Right cardiac atrium (tissue), 5 donors: ENCODE measurements at regions of chr5 and their contacts with region 1.

Region 1: GRCh38 chr5:181159286-181159829 is 12.0 kb downstream of the OR2V2 start:
- DNase-seq: peak; percentile 80 to 93 (median 93)
- ATAC-seq: peak; percentile 87 to 88
- H3K4me3 ChIP-seq: no peak overlapping the region
- H3K27ac ChIP-seq: no peak overlapping the region
- H3K4me1 ChIP-seq: no peaks in the 10 kb centered on the region
- H3K27me3 ChIP-seq: no peaks in the 10 kb centered on the region

Region 2: GRCh38 chr5:180868960-180869359 is 290.4 kb before region 1 on chr5:
- intact Hi-C with region 1: loop called in 1 of 4 experiments (anchors 10 kb)
- DNase-seq: peak; percentile 78 to 92 (median 88)
- ATAC-seq: peak; percentile 70 to 82
- H3K4me3 ChIP-seq: no peak overlapping the region
- H3K27ac ChIP-seq: no peak overlapping the region
- H3K4me1 ChIP-seq: peaks cover 2% of the 10 kb centered on the region
- H3K27me3 ChIP-seq: no peaks in the 10 kb centered on the region